AG04450 (cell line): ENCODE measurements at regions of chr15 and their contacts with region 1.

Region 1: GRCh38 chr15:32844118-32844711 is 126.4 kb downstream of the GREM1 start:
- DNase-seq: no peak
- H3K4me3 ChIP-seq: no peak overlapping the region
- H3K27ac ChIP-seq: no peak overlapping the region
- H3K27me3 ChIP-seq: no peaks in the 10 kb centered on the region
- CTCF ChIP-seq: peak; percentile 69

Region 2: DNA sequence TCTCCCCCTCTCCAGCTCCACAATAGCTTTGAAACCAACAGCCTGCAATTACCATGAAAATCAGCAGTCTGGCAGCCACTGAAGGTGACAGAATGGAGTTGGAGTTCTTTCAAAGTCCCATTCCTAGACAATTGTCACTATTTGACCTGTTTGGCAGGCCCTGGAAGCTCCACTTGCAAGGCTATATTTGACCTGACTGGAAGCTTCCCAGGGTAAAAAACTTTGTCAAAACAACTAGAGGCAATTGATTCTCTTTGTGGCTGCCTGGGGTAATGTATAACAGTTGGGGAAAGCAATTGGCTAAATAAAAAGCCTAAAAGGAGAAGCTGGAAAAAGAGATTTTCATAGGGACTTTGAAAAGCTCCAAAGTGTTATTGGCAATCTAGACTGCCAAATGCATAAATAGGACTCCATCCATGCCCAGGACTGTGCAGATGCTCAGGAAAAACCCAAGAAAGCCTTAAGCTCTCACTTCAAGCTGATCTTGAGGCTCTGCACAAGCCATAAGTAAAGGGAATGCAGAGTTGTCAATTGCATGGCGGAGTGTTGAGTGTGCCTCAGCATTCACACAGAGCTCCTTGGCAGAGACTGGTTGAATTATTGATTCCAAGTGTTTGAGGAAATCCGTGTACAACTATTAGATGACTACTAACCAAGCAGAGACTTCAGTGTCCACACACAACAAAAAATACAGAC is 108.1 kb before region 1 on chr15:
- CTCF ChIA-PET with region 1: no interaction called
- POLR2A ChIA-PET with region 1: no interaction called
- DNase-seq: no peak
- H3K4me3 ChIP-seq: no peak overlapping the region
- H3K27ac ChIP-seq: no peak overlapping the region
- H3K27me3 ChIP-seq: no peaks in the 10 kb centered on the region
- CTCF ChIP-seq: no peak

Region 3: DNA sequence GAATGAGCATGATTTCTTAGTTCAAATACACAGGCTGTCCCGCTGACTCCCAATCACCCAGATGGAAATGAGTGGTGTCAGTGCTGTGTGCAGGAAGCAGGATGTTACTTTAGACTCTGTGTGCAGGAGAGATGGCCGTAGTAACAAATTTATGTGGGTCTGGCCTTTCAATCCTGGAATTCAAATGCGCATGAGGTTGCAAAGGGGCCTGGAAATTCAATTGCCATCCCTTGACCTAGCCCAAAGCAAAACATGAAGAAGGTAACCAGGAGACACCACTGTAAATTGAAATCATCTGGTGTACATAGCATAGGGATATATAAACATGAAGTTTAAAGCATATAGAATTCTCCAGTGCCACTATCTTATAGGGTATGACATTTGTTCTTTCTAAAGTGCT is 93.2 kb before region 1 on chr15:
- CTCF ChIA-PET with region 1: no interaction called
- POLR2A ChIA-PET with region 1: no interaction called
- DNase-seq: no peak
- H3K4me3 ChIP-seq: no peak overlapping the region
- H3K27ac ChIP-seq: no peak overlapping the region
- H3K27me3 ChIP-seq: no peaks in the 10 kb centered on the region
- CTCF ChIP-seq: no peak

Region 4: DNA sequence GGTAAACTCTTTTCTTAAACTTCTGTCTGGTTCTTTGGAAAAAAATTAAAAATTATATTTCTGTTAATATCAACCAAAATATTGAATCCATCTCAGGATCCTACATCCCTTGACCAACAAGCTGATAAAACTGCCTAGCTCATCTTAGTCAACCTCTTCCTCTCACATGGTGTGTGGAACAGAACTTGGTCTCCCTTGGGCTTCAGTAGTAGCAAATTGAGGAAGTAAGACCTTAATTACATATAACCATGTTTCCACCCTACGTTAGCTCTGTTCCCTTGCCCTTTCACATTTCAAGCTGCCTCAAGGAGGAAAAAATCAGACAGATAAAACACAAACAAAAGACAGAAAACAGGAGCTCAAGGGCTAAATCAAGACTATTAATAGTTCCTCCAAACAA is 10.1 kb before region 1 on chr15:
- CTCF ChIA-PET with region 1: interaction called, 26 read pairs
- POLR2A ChIA-PET with region 1: interaction called, 6 read pairs
- DNase-seq: no peak
- H3K4me3 ChIP-seq: no peak overlapping the region
- H3K27ac ChIP-seq: no peak overlapping the region
- H3K27me3 ChIP-seq: no peaks in the 10 kb centered on the region
- CTCF ChIP-seq: no peak

Region 5: DNA sequence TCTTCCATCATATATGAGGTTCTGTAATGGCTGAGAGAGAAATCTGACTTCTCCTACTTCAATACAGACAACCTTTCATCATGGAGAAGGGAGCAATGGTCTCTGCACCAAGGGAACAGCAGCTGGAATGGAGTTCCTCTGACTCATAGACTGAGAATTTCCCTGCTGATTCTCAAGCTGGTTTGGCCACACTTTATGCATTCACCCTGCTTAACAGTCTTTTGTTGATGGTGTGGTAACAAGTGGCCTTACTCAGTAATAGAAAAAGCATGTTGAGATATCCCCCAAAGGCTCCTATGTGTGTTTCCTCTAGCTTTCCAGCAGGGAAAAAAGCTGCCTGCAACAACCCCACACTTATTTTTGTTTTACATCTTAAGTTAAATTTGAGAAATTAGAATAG is 11.7 kb after region 1 on chr15:
- CTCF ChIA-PET with region 1: interaction called, 10 read pairs
- POLR2A ChIA-PET with region 1: interaction called, 3 read pairs
- DNase-seq: peak; percentile 97
- H3K4me3 ChIP-seq: no peak overlapping the region
- H3K27ac ChIP-seq: peak overlapping the region; percentile 94
- H3K27me3 ChIP-seq: no peaks in the 10 kb centered on the region
- CTCF ChIP-seq: peak; percentile 37; the same call in 1 of the 2 replicates

Region 6: GRCh38 chr15:32956006-32956405 is 111.8 kb after region 1 on chr15:
- CTCF ChIA-PET with region 1: interaction called, 16 read pairs
- POLR2A ChIA-PET with region 1: interaction called, 4 read pairs
- DNase-seq: peak; percentile 81
- H3K4me3 ChIP-seq: no peak overlapping the region
- H3K27ac ChIP-seq: no peak overlapping the region
- H3K27me3 ChIP-seq: no peaks in the 10 kb centered on the region
- CTCF ChIP-seq: peak; percentile 79

Region 7: DNA sequence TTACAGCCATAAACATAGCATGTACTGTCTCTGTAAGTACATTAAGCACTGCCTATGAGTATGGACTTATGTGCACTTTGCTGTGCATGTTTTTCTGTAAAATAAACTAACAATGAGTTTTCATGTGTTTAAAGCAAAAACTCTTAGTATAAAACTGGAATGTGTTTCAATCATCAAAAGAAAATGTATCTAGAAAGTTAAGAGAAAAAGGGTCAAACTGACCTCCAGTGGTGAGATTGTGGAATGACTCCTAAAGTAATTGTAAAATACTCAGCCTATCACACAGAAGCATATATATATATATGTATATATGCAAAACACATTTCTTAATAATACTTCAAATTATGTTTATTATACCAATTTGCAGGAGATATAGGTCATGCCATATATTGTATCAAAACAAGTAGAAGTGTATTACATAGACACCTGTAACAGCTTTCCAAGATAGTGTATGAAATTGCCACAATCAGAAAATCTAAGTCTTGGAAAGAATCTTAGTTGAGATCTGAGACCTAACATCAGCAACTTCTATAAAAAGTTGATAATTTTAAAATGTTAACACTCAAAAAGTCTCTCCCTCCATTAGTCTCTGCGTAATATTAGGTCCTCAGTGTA is 150.7 kb after region 1 on chr15:
- CTCF ChIA-PET with region 1: interaction called, 11 read pairs
- POLR2A ChIA-PET with region 1: interaction called, 3 read pairs
- DNase-seq: no peak
- H3K4me3 ChIP-seq: no peak overlapping the region
- H3K27ac ChIP-seq: no peak overlapping the region
- H3K27me3 ChIP-seq: no peaks in the 10 kb centered on the region
- CTCF ChIP-seq: peak; percentile 70